GM12878 (cell line): ENCODE measurements at regions of chr1 and their contacts with region 1.

Region 1: DNA sequence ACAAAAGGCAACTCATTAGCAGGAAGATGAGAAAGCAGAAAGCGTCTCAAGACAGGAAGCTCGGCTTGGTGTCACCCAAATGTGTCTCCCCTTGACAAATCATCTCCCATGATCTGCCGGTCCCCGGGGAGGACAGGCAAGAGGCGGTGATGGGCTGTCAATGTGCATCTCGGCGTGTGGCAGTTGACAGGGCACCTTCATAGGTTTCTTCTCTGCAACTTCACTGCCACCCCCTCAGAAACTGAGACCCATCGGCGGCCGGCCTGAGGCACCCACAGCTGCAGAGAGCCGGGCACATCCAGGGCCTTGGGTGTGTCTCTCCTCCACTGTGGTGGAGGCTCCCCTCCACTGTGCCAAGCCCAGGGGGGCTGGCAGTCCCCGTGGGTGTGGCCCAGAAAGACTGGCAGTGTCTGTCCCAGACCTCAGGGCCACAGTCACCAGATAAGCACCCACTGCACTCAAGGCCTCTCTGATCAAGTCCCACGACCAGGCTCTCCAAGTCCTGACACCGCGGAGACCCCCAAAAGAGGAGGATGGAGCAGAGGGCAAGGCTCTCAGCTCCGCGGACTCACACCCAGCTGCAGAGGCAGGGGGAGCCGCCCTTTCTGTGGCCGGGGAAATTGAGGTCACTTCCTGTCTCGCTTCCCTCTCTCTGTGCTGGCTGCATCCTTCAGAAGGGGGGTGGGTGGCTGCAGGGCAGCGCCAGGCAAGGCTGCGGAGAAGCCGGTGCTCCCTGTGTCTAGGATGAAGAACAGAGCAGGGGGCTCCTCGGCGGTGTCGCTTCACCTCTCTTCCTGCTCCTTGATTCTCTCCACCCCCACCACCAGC is 39.6 kb upstream of the LBR start:
- DNase-seq: peak; percentile 74
- ATAC-seq: peak; percentile 96
- H3K4me3 ChIP-seq: peak overlapping the region; percentile 71
- H3K27ac ChIP-seq: peak overlapping the region; percentile 96
- H3K4me1 ChIP-seq: peaks cover 13% of the 10 kb centered on the region; the same call in 1 of the 2 replicates
- H3K27me3 ChIP-seq: no peaks in the 10 kb centered on the region
- CTCF ChIP-seq: no peak
- EP300 ChIP-seq: peak in 1 of 2 experiments; percentile 32; a peak in 1 of 4 replicates
- POLR2A ChIP-seq: peak; percentile 88
- RAD21 ChIP-seq: 0 out of 2 replicates have a peak, but pooled peaks have one; percentile 4

Region 2: GRCh38 chr1:225428068-225428880 is 39.1 kb before region 1 on chr1:
- CTCF ChIA-PET with region 1: interaction called, 11 read pairs
- POLR2A ChIA-PET with region 1: interaction called, 8 read pairs
- RAD21 ChIA-PET with region 1: interaction called, 13 read pairs
- SMC1A ChIA-PET with region 1: interaction called, 6 read pairs
- in situ Hi-C with region 1: no loop called
- intact Hi-C with region 1: loop called (anchors 2 kb)
- DNase-seq: peak; percentile 65
- ATAC-seq: peak; percentile 92
- H3K4me3 ChIP-seq: peak overlapping the region; percentile 80
- H3K27ac ChIP-seq: peak overlapping the region; percentile 96
- H3K4me1 ChIP-seq: peaks cover 17% of the 10 kb centered on the region
- H3K27me3 ChIP-seq: no peaks in the 10 kb centered on the region
- CTCF ChIP-seq: no peak
- EP300 ChIP-seq: no peak
- POLR2A ChIP-seq: peak; percentile 93
- RAD21 ChIP-seq: no peak

Region 3: DNA sequence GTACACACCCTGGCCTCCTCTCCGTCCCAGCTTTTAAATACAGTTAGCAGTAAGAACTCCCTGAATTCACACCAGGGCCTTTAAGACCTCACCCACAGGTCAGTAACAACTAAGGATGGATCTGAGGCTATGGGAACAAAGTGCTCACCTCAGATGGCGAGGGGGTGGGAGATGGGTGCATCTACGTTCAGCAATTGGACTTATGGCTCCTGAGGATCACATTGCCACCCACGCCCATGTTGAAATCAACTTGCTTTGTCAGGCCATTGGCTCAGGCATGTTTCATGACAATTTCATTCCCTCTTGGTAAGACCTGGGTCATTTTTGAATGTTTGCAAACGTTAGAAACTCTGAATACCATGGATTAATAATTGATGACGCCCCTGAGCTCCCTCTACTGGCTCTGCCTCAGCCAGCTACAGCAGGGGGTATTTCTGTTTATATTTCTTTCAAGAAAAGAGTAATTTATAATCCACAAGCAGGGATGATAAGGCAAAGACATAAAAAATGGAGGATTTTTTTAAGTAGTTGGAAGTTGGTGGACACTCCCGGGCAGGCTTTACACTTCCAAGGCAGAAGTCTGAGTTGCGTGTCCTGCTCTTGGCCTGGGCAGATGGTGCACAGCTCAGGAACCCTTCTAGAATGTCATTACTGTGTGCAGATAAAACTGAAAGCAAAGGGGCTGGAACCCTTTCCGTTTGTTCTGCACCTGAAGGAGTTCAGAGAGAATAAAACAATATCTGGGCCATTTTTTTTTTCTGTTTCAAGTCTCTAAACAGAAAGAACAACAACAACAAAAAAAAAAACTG is 25.9 kb before region 1 on chr1:
- CTCF ChIA-PET with region 1: interaction called, 16 read pairs
- POLR2A ChIA-PET with region 1: interaction called, 12 read pairs
- RAD21 ChIA-PET with region 1: interaction called, 4 read pairs
- SMC1A ChIA-PET with region 1: interaction called, 14 read pairs
- in situ Hi-C with region 1: no loop called
- intact Hi-C with region 1: loop called (anchors 1 kb)
- DNase-seq: no peak
- ATAC-seq: peak; percentile 41
- H3K4me3 ChIP-seq: peak overlapping the region; percentile 2; the same call in 1 of the 2 replicates
- H3K27ac ChIP-seq: peak overlapping the region; percentile 59
- H3K4me1 ChIP-seq: peaks cover 33% of the 10 kb centered on the region
- H3K27me3 ChIP-seq: no peaks in the 10 kb centered on the region
- CTCF ChIP-seq: peak; percentile 39 to 46 (median 45); a peak in 5 of 6 replicates
- EP300 ChIP-seq: no peak
- POLR2A ChIP-seq: no peak
- RAD21 ChIP-seq: peak; percentile 37; the same call in 1 of the 2 replicates

Region 4: DNA sequence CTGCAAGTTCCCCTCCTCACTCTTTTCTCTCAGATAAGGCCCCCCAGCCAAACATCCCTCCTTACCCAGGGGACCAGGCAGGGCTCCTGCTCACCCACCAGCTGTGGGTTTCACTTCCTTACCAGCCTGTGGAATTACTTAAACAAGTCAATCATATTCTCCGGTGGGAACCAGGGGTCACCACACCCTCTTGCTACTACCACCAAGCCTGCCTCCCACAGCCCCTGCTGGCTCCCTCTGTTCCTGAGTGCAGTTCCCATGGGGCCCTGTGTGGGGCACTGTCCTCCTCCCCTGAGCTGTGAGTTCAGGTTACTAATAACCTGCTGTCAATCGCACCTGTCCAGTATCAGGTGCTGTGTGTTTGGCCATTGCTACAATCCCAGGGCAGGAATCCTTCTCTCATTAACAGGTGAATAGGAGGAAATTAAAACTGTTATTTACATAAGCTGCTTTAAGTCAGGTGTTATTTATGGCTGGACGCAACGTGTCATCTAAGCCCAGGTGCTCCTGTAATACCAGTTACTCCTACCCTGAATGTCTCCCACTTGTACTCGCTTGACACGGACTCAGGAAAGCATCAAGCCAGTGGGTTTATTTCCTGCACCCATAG is 13.5 kb after region 1 on chr1:
- CTCF ChIA-PET with region 1: interaction called, 11 read pairs
- POLR2A ChIA-PET with region 1: no interaction called
- RAD21 ChIA-PET with region 1: no interaction called
- SMC1A ChIA-PET with region 1: interaction called, 4 read pairs
- in situ Hi-C with region 1: no loop called
- intact Hi-C with region 1: no loop called
- DNase-seq: no peak
- ATAC-seq: peak; percentile 88
- H3K4me3 ChIP-seq: no peak overlapping the region
- H3K27ac ChIP-seq: no peak overlapping the region
- H3K4me1 ChIP-seq: peaks cover 32% of the 10 kb centered on the region
- H3K27me3 ChIP-seq: 0 out of 4 replicates have a peak, but pooled peaks cover 0 to 2% of the 10 kb centered on the region in 2 experiments
- CTCF ChIP-seq: peak; percentile 58 to 95 (median 94)
- EP300 ChIP-seq: no peak
- POLR2A ChIP-seq: no peak
- RAD21 ChIP-seq: peak; percentile 63

Region 5: GRCh38 chr1:225498549-225499136 is 31.2 kb after region 1 on chr1:
- CTCF ChIA-PET with region 1: no interaction called
- POLR2A ChIA-PET with region 1: no interaction called
- RAD21 ChIA-PET with region 1: no interaction called
- SMC1A ChIA-PET with region 1: no interaction called
- in situ Hi-C with region 1: no loop called
- intact Hi-C with region 1: no loop called
- DNase-seq: no peak
- ATAC-seq: peak; percentile 38; the same call in 2 of the 3 replicates
- H3K4me3 ChIP-seq: no peak overlapping the region
- H3K27ac ChIP-seq: no peak overlapping the region
- H3K4me1 ChIP-seq: no peaks in the 10 kb centered on the region
- H3K27me3 ChIP-seq: no peaks in the 10 kb centered on the region
- CTCF ChIP-seq: no peak
- EP300 ChIP-seq: no peak
- POLR2A ChIP-seq: no peak
- RAD21 ChIP-seq: no peak

Region 6: GRCh38 chr1:225923692-225924555 is 456.5 kb after region 1 on chr1 and contains the start of gene PYCR2:
- CTCF ChIA-PET with region 1: no interaction called
- POLR2A ChIA-PET with region 1: interaction called, 5 read pairs
- RAD21 ChIA-PET with region 1: no interaction called
- SMC1A ChIA-PET with region 1: no interaction called
- in situ Hi-C with region 1: no loop called
- intact Hi-C with region 1: loop called (anchors 5 kb)
- DNase-seq: peak; percentile 79
- ATAC-seq: peak; percentile 98
- H3K4me3 ChIP-seq: peak within 1 kb of the TSS; percentile 94
- H3K27ac ChIP-seq: peak within 1 kb of the TSS; percentile 96
- H3K4me1 ChIP-seq: peaks cover 7% of the 10 kb centered on the region
- H3K27me3 ChIP-seq: no peaks in the 10 kb centered on the region
- CTCF ChIP-seq: no peak
- EP300 ChIP-seq: no peak
- POLR2A ChIP-seq: peak; percentile 96
- RAD21 ChIP-seq: no peak
- polyA plus RNA-seq, gene PYCR2: 1.7 to 5.9 TPM

Region 7: GRCh38 chr1:226109829-226110248 is 642.4 kb after region 1 on chr1:
- CTCF ChIA-PET with region 1: no interaction called
- POLR2A ChIA-PET with region 1: no interaction called
- RAD21 ChIA-PET with region 1: no interaction called
- SMC1A ChIA-PET with region 1: no interaction called
- in situ Hi-C with region 1: no loop called
- intact Hi-C with region 1: loop called (anchors 5 kb)
- DNase-seq: no peak
- ATAC-seq: peak; percentile 71
- H3K4me3 ChIP-seq: peak overlapping the region; percentile 77
- H3K27ac ChIP-seq: peak overlapping the region; percentile 92
- H3K4me1 ChIP-seq: peaks cover 23% of the 10 kb centered on the region
- H3K27me3 ChIP-seq: no peaks in the 10 kb centered on the region
- CTCF ChIP-seq: peak in 2 of 3 experiments; percentile 12 to 20; a peak in 1 of 6 replicates
- EP300 ChIP-seq: no peak
- POLR2A ChIP-seq: 0 out of 2 replicates have a peak, but pooled peaks have one; percentile 13
- RAD21 ChIP-seq: peak; percentile 25; the same call in 1 of the 2 replicates